ENCODE measurements at regions of chr15 and their contacts with region 1.

Region 1: DNA sequence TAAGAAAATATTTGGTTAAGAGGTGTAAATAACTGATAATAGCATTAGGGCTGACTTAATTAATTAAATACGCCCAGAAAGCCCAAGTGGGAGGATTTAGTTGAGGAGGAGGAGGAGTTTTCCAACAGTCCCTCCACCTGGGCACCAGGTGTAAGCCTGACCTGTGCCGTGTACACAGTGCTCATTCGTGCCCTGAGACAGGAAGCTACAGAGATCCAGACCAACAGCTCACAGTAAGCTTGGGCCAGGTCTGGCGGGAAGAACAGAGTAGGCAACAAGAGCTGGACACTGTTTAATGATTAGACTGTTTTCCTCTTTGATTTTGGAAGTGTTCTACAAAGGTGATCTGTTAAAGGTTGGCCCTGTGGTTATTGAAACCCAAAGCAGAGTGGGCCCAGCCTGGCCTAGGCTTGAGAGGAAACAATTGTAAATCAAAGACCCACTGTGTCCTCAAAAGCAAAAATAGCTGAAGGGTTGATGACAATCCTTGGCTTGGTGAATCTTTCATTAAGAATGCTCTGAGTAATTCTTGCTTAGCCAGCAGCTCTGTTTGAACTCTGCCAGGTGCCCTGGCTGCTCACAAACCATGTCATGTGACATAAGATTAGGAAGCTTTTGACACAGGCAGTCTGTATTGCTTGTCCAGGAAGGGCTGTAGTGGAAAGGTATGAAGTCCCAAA is 13.8 kb downstream of the SQOR start:
- DNase-seq: no peak
- H3K4me3 Mint-ChIP-seq: no peak overlapping the region
- H3K27ac Mint-ChIP-seq: peak overlapping the region; percentile 15
- H3K4me1 Mint-ChIP-seq: peaks cover 49% of the 10 kb centered on the region
- H3K27me3 Mint-ChIP-seq: no peaks in the 10 kb centered on the region

Region 2: GRCh38 chr15:45637552-45638033 is 11.1 kb before region 1 on chr15:
- CTCF ChIA-PET with region 1: interaction called, 17 read pairs
- POLR2A ChIA-PET with region 1: no interaction called
- DNase-seq: peak; percentile 72
- H3K4me3 Mint-ChIP-seq: peak overlapping the region; percentile 71
- H3K27ac Mint-ChIP-seq: peak overlapping the region; percentile 92
- H3K4me1 Mint-ChIP-seq: peaks cover 59% of the 10 kb centered on the region
- H3K27me3 Mint-ChIP-seq: no peaks in the 10 kb centered on the region

Measured in activated CD4-positive, alpha-beta T cell treated with anti-CD3 and anti-CD28 coated beads, Interleukin-2, amount 10 ng/mL, durations not matched to agents 7 days and 5 days (primary cell).